ENCODE measurements at regions of chr6 and their contacts with region 1.

Region 1: DNA sequence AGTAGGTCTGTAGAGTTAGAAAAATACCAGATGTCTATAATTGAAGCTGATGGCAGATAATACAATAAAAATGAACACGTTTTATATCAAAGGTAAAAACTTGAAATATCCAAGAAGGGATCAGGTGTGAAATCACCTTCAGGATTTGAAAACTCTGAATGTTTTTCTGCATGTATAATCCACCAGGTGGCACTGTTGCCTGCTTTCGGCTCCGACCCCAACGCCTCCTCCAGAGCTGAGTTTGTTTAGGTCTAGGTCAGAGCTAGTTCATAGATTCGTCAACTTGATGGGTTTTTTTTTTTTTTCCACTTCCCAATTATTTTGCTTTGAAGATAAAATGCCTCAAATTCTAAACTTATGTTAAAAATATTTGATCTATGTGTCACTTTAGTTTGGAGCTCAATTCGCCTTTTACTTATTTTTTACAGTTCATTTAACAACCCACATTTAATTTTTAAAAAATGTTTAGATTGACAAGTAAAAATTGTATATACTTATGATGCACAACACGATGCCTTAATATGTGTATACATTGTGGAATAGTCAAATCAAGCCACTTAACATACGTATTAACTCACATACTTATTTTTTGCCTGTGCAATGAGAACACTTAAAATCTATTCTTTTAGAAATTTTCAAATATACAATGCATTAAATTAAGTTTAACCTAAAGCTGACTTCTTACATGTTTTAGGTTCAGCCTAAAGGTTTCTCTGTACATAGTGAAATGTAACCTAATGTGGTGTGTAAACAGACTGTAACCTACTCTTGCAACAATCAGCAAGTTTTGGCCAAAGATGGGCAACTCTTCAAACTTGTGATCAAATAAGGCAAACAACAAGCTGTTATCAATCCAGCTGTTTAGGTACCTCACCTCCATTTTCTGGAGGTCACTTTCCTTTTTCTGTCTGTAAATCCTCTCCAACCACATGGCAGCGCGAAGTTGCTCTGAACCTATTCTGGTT is 39.4 kb upstream of the ENPP4 start:
- DNase-seq: peak; percentile 17
- ATAC-seq: peak; percentile 84
- H3K4me3 ChIP-seq: no peak overlapping the region
- H3K27ac ChIP-seq: no peak overlapping the region
- H3K4me1 ChIP-seq: no peaks in the 10 kb centered on the region
- H3K27me3 ChIP-seq: no peaks in the 10 kb centered on the region
- CTCF ChIP-seq: peak; percentile 63 to 85 (median 68); a peak in 5 of 6 replicates
- EP300 ChIP-seq: no peak
- POLR2A ChIP-seq: no peak
- RAD21 ChIP-seq: peak; percentile 97

Region 2: GRCh38 chr6:45930420-45931040 is 159.9 kb before region 1 on chr6:
- CTCF ChIA-PET with region 1: interaction called, 9 read pairs
- POLR2A ChIA-PET with region 1: no interaction called
- RAD21 ChIA-PET with region 1: interaction called, 14 read pairs
- SMC1A ChIA-PET with region 1: interaction called, 6 read pairs
- in situ Hi-C with region 1: no loop called
- intact Hi-C with region 1: no loop called
- DNase-seq: no peak
- ATAC-seq: peak; percentile 84
- H3K4me3 ChIP-seq: no peak overlapping the region
- H3K27ac ChIP-seq: no peak overlapping the region
- H3K4me1 ChIP-seq: no peaks in the 10 kb centered on the region
- H3K27me3 ChIP-seq: peaks cover 1 to 3% of the 10 kb centered on the region in 2 experiments; a peak in 1 of 4 replicates
- CTCF ChIP-seq: peak; percentile 86 to 97 (median 96)
- EP300 ChIP-seq: no peak
- POLR2A ChIP-seq: no peak
- RAD21 ChIP-seq: peak; percentile 73

Region 3: GRCh38 chr6:46129629-46130511 is 39.5 kb after region 1 on chr6 and contains the start of gene ENPP4:
- CTCF ChIA-PET with region 1: interaction called, 4 read pairs
- POLR2A ChIA-PET with region 1: no interaction called
- RAD21 ChIA-PET with region 1: interaction called, 13 read pairs
- SMC1A ChIA-PET with region 1: interaction called, 16 read pairs
- in situ Hi-C with region 1: no loop called
- intact Hi-C with region 1: no loop called
- DNase-seq: peak; percentile 100
- ATAC-seq: peak; percentile 99
- H3K4me3 ChIP-seq: peak within 1 kb of the TSS; percentile 95
- H3K27ac ChIP-seq: peak within 1 kb of the TSS; percentile 68
- H3K4me1 ChIP-seq: peaks cover 12% of the 10 kb centered on the region
- H3K27me3 ChIP-seq: no peaks in the 10 kb centered on the region
- CTCF ChIP-seq: 0 out of 6 replicates have a peak, but pooled peaks of 1 of the 3 experiments have one; percentile 6
- EP300 ChIP-seq: no peak
- POLR2A ChIP-seq: peak; percentile 80
- RAD21 ChIP-seq: no peak
- polyA plus RNA-seq, gene ENPP4: 3.3 to 5.2 TPM

Region 4: DNA sequence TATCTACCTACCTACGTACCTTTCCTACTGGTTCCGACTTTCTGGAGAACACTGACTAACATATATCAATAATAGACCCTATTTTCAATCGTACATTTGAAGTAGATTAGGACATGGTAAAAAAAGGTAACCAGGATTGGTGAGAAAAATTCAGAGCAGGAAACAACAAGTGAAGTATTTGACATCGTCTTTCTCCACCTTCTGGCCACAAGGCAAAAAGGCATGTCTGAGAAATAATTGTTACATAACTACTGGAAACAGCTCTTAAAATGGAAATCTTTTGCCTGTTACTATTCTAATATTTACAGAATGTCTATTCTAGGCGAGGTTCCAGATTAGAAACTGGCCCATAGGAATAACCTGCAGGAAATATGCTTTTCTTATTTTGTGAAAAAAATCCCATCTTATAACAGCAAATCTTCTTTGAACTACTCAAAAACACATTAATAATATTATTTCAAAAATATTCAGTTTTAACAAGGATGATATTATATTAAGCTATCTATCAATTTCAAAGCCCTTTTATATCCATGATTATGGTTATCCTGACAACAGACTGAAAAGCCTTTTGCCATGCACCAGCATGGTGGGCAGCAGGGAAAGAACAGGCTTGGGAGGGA is 320.0 kb after region 1 on chr6:
- CTCF ChIA-PET with region 1: interaction called, 39 read pairs
- POLR2A ChIA-PET with region 1: no interaction called
- RAD21 ChIA-PET with region 1: interaction called, 52 read pairs
- SMC1A ChIA-PET with region 1: interaction called, 39 read pairs
- in situ Hi-C with region 1: loop called (anchors 5 kb)
- intact Hi-C with region 1: loop called (anchors 1 kb)
- DNase-seq: peak; percentile 21
- ATAC-seq: peak; percentile 44; the same call in 1 of the 3 replicates
- H3K4me3 ChIP-seq: no peak overlapping the region
- H3K27ac ChIP-seq: no peak overlapping the region
- H3K4me1 ChIP-seq: no peaks in the 10 kb centered on the region
- H3K27me3 ChIP-seq: no peaks in the 10 kb centered on the region
- CTCF ChIP-seq: peak; percentile 46 to 61 (median 53); a peak in 5 of 6 replicates
- EP300 ChIP-seq: no peak
- POLR2A ChIP-seq: no peak
- RAD21 ChIP-seq: peak; percentile 80

Region 5: DNA sequence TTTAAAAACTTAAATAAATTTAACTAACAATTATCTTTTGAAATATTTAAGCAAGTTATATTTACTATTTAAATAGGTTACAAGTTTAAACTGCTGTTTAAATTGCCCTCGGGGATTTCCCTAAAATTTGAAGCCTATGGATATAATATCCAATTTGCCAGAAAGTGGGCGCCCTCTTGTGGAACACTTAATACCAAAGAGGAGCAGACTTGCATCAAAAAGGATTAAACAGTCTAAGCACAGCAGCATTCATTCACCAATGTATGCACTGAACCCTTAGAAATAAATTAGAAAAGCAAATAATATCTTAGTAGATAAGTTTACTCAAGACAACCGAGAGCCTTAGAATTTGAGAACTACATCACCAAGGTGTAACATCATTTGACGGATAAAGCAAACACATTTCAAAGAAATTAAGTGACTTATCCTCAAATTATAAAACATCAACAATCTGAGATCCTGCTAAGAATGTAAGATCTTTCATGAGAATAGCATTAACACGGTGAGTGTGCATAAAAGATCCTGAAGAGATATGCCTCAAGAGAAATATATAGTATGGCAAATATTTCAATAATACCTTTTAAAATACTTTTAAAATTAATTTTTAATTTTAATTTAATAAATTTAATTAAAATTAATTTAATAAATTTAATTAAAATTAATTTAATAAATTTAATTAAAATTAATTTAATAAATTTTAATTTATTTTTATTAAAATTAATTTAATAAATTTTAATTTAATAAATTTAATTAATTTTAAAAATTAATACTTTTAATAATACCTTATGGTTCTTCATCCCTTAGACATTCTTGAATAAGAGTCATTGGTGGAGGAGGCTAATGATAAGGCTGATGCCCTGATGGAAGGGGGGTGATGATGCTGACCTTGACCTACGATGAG is 691.3 kb after region 1 on chr6:
- CTCF ChIA-PET with region 1: interaction called, 4 read pairs
- POLR2A ChIA-PET with region 1: no interaction called
- RAD21 ChIA-PET with region 1: no interaction called
- SMC1A ChIA-PET with region 1: no interaction called
- in situ Hi-C with region 1: no loop called
- intact Hi-C with region 1: loop called (anchors 2 kb)
- DNase-seq: no peak
- ATAC-seq: peak; percentile 68; the same call in 2 of the 3 replicates
- H3K4me3 ChIP-seq: no peak overlapping the region
- H3K27ac ChIP-seq: no peak overlapping the region
- H3K4me1 ChIP-seq: no peaks in the 10 kb centered on the region
- H3K27me3 ChIP-seq: no peaks in the 10 kb centered on the region
- CTCF ChIP-seq: peak; percentile 53 to 60 (median 56)
- EP300 ChIP-seq: no peak
- POLR2A ChIP-seq: no peak
- RAD21 ChIP-seq: peak; percentile 65

Measured in GM12878 (cell line).